ENCODE measurements at regions of chr3 and their contacts with region 1.

Region 1: GRCh38 chr3:128497387-128498126 is 4.6 kb upstream of the GATA2 start:
- DNase-seq: peak; percentile 75
- H3K4me3 ChIP-seq: peak overlapping the region; percentile 58 to 60
- H3K27ac ChIP-seq: no peak overlapping the region
- H3K4me1 ChIP-seq: peaks cover 11% of the 10 kb centered on the region
- H3K27me3 ChIP-seq: no peaks in the 10 kb centered on the region
- CTCF ChIP-seq: peak; percentile 50 to 89 (median 58)
- POLR2A ChIP-seq: no peak

Region 2: GRCh38 chr3:128075516-128076482 is 421.8 kb before region 1 on chr3:
- intact Hi-C with region 1: loop called (anchors 10 kb)
- DNase-seq: peak; percentile 91
- H3K4me3 ChIP-seq: peak overlapping the region; percentile 47 to 59
- H3K27ac ChIP-seq: no peak overlapping the region
- H3K4me1 ChIP-seq: peaks cover 11% of the 10 kb centered on the region
- H3K27me3 ChIP-seq: no peaks in the 10 kb centered on the region
- CTCF ChIP-seq: peak; percentile 87 to 95 (median 95)
- POLR2A ChIP-seq: no peak

Region 3: GRCh38 chr3:128170805-128171516 is 326.6 kb before region 1 on chr3:
- intact Hi-C with region 1: loop called (anchors 5 kb)
- DNase-seq: peak; percentile 82
- H3K4me3 ChIP-seq: no peak overlapping the region
- H3K27ac ChIP-seq: no peak overlapping the region
- H3K4me1 ChIP-seq: no peaks in the 10 kb centered on the region
- H3K27me3 ChIP-seq: no peaks in the 10 kb centered on the region
- CTCF ChIP-seq: peak; percentile 66 to 77 (median 73)
- POLR2A ChIP-seq: no peak

Region 4: GRCh38 chr3:128426128-128426921 is 71.2 kb before region 1 on chr3:
- intact Hi-C with region 1: loop called (anchors 5 kb)
- DNase-seq: peak; percentile 41
- H3K4me3 ChIP-seq: peak overlapping the region; percentile 6 to 24
- H3K27ac ChIP-seq: no peak overlapping the region
- H3K4me1 ChIP-seq: no peaks in the 10 kb centered on the region
- H3K27me3 ChIP-seq: no peaks in the 10 kb centered on the region
- CTCF ChIP-seq: peak; percentile 83 to 92 (median 90)
- POLR2A ChIP-seq: no peak

Region 5: DNA sequence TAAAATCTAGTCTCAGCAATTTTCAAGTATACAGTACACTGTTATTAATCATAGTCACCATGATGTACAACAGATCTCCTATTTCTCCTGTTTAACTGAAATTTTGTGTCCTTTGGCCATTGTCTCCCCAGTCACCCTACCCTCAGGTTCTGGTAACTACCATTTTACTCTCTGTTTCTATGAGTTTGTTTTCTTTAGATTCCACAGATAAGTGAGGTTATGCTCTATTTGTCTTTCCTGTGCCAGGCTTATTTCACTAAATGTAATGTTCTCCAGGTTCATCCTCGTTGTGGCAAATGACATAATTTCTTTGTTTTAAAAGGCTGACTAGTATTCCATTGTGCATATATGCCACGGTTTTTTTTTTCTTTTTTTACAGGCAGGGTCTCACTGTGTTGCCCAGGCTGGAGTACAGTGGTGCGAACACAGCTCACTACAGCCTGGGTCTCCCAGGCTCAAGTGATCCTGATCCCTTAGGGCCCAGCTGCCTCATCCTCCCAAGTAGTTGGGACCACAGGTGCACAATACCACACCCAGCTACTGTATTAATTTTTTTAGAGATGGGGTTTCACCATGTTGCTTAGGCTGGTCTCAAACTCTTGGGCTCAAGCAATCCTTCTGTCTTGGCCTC is 278.5 kb after region 1 on chr3:
- intact Hi-C with region 1: no loop called
- DNase-seq: no peak
- H3K4me3 ChIP-seq: no peak overlapping the region
- H3K27ac ChIP-seq: no peak overlapping the region
- H3K4me1 ChIP-seq: peaks cover 4% of the 10 kb centered on the region
- H3K27me3 ChIP-seq: no peaks in the 10 kb centered on the region
- CTCF ChIP-seq: no peak
- POLR2A ChIP-seq: no peak

Measured in testis (tissue), 5 donors.